ENCODE measurements at regions of chr2 and their contacts with region 1.

Region 1: GRCh38 chr2:190097115-190097514 is 34.6 kb upstream of the MSTN start:
- DNase-seq: no peak
- H3K4me3 ChIP-seq: no peak overlapping the region
- H3K27ac ChIP-seq: no peak overlapping the region
- H3K4me1 ChIP-seq: no peaks in the 10 kb centered on the region
- H3K27me3 ChIP-seq: no peaks in the 10 kb centered on the region
- CTCF ChIP-seq: no peak
- EP300 ChIP-seq: no peak
- POLR2A ChIP-seq: no peak

Region 2: GRCh38 chr2:189870381-189871085 is 226.6 kb before region 1 on chr2:
- intact Hi-C with region 1: no loop called
- DNase-seq: no peak
- H3K4me3 ChIP-seq: no peak overlapping the region
- H3K27ac ChIP-seq: no peak overlapping the region
- H3K4me1 ChIP-seq: no peaks in the 10 kb centered on the region
- H3K27me3 ChIP-seq: no peaks in the 10 kb centered on the region
- CTCF ChIP-seq: no peak
- EP300 ChIP-seq: no peak
- POLR2A ChIP-seq: no peak

Region 3: DNA sequence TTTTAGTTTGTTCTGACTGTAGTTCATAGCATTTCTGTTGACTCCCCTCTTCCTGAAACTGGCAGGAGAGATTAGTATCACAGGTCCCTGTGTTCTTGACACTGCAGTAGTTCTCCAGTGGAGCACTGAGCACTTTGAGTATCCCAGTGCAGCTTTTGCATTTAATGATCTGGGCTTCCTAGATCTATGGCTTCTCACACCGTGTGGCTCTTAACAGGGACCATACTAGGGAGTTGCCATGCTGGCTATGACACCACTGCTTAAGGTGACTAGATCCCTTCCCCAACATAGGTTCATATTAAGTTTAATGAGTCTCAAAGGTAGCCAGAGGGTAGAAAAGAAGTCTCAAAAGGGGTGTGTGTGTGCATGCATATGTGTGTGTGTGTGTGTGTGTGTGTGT is 28.4 kb before region 1 on chr2:
- intact Hi-C with region 1: loop called in 1 of 4 experiments (anchors 1 kb)
- DNase-seq: no peak
- H3K4me3 ChIP-seq: no peak overlapping the region
- H3K27ac ChIP-seq: no peak overlapping the region
- H3K4me1 ChIP-seq: no peaks in the 10 kb centered on the region
- H3K27me3 ChIP-seq: no peaks in the 10 kb centered on the region
- CTCF ChIP-seq: no peak
- EP300 ChIP-seq: no peak
- POLR2A ChIP-seq: no peak

Measured in ovary (tissue), 10 donors.